GM12878 (cell line): ENCODE measurements at regions of chr14 and their contacts with region 1.

Region 1: GRCh38 chr14:87066221-87066817 is 926.7 kb downstream of the GALC start:
- DNase-seq: no peak
- ATAC-seq: no peak
- H3K4me3 ChIP-seq: no peak overlapping the region
- H3K27ac ChIP-seq: no peak overlapping the region
- H3K4me1 ChIP-seq: no peaks in the 10 kb centered on the region
- H3K27me3 ChIP-seq: no peaks in the 10 kb centered on the region
- CTCF ChIP-seq: peak in 1 of 3 experiments; percentile 10; a peak in 1 of 6 replicates
- EP300 ChIP-seq: no peak
- POLR2A ChIP-seq: no peak
- RAD21 ChIP-seq: no peak

Region 2: GRCh38 chr14:86961106-86961716 is 105.1 kb before region 1 on chr14:
- CTCF ChIA-PET with region 1: no interaction called
- POLR2A ChIA-PET with region 1: no interaction called
- RAD21 ChIA-PET with region 1: no interaction called
- SMC1A ChIA-PET with region 1: no interaction called
- in situ Hi-C with region 1: no loop called
- intact Hi-C with region 1: no loop called
- DNase-seq: no peak
- ATAC-seq: peak; percentile 65; the same call in 2 of the 3 replicates
- H3K4me3 ChIP-seq: no peak overlapping the region
- H3K27ac ChIP-seq: no peak overlapping the region
- H3K4me1 ChIP-seq: no peaks in the 10 kb centered on the region
- H3K27me3 ChIP-seq: no peaks in the 10 kb centered on the region
- CTCF ChIP-seq: peak; percentile 15 to 29 (median 18); a peak in 3 of 6 replicates
- EP300 ChIP-seq: no peak
- POLR2A ChIP-seq: no peak
- RAD21 ChIP-seq: 0 out of 2 replicates have a peak, but pooled peaks have one; percentile 22

Region 3: DNA sequence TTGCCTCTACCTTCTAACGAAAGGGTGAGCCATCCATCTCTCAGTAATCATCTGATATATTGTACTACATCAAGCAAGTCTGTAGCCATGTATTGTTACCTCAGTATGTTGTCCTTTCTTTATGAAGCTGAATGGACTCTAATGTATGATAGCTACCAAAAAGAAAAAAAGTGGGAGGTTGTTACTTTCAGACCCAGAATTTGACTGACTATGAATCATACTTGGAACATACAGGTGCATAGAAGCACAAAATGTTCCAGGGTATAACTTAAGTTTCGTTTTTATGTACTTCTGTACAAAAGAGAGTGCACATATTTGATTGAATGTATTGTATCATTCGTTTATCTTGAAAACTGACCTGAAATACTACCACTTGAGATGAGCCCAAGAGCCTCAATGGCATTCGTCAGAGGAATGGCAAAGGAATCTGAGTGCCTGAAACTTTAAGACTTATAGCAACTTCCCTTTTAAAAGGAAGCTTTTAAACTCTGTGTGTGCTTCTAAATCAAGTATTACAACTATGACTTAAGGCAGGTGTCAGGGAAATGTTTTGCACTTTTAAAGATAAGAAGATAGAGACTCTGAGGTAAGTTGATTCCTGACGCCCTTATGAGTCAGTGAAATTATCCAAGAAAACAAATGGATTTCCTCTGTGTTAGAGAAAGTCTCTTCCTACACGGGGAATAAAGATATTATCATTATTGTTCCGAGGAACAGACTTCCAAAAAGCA is 24.9 kb before region 1 on chr14:
- CTCF ChIA-PET with region 1: no interaction called
- POLR2A ChIA-PET with region 1: no interaction called
- RAD21 ChIA-PET with region 1: no interaction called
- SMC1A ChIA-PET with region 1: no interaction called
- in situ Hi-C with region 1: no loop called
- intact Hi-C with region 1: no loop called
- DNase-seq: no peak
- ATAC-seq: no peak
- H3K4me3 ChIP-seq: no peak overlapping the region
- H3K27ac ChIP-seq: no peak overlapping the region
- H3K4me1 ChIP-seq: no peaks in the 10 kb centered on the region
- H3K27me3 ChIP-seq: no peaks in the 10 kb centered on the region
- CTCF ChIP-seq: no peak
- EP300 ChIP-seq: no peak
- POLR2A ChIP-seq: no peak
- RAD21 ChIP-seq: no peak

Region 4: DNA sequence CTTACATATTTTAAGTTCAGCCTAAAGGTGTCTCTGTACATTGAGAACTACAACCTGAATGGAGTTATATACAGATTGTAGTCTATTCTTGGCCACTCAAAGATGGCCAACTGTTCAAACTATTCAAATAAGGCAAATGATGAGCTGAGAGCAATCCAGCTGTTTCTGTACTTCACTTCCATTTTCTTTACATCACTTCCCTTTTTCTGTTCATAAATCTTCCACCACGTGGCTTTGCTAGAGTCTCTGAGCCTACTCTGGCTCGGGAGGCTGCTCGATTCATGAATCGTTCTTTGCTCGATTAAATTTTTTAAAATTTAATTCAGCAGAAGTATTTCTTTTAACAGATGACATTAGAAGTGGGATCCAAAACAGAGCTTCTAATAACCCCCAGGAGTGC is 47.0 kb after region 1 on chr14:
- CTCF ChIA-PET with region 1: no interaction called
- POLR2A ChIA-PET with region 1: no interaction called
- RAD21 ChIA-PET with region 1: no interaction called
- SMC1A ChIA-PET with region 1: no interaction called
- in situ Hi-C with region 1: no loop called
- intact Hi-C with region 1: loop called (anchors 5 kb)
- DNase-seq: no peak
- ATAC-seq: no peak
- H3K4me3 ChIP-seq: no peak overlapping the region
- H3K27ac ChIP-seq: no peak overlapping the region
- H3K4me1 ChIP-seq: no peaks in the 10 kb centered on the region
- H3K27me3 ChIP-seq: no peaks in the 10 kb centered on the region
- CTCF ChIP-seq: no peak
- EP300 ChIP-seq: no peak
- POLR2A ChIP-seq: no peak
- RAD21 ChIP-seq: no peak

Region 5: DNA sequence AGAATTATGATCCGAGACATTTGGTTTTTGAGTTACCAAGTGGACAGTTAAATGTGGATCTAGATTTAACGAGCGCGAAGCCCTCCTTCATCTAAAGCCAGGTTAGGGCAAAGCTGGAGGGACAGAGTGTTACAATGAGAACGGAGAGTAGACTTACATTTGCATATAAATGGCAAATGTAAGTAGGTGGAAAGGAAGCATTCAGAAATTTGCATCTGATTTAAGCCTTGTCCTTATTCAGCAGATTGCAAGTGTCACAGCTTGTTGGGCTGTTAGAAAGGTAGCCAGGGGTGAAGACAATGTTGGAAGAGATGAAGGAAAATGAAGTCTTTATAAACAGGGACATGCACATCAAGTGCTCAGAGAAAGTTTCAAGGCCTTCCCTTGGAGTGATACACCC is 120.4 kb after region 1 on chr14:
- CTCF ChIA-PET with region 1: no interaction called
- POLR2A ChIA-PET with region 1: no interaction called
- RAD21 ChIA-PET with region 1: no interaction called
- SMC1A ChIA-PET with region 1: no interaction called
- in situ Hi-C with region 1: no loop called
- intact Hi-C with region 1: no loop called
- DNase-seq: no peak
- ATAC-seq: no peak
- H3K4me3 ChIP-seq: no peak overlapping the region
- H3K27ac ChIP-seq: no peak overlapping the region
- H3K4me1 ChIP-seq: no peaks in the 10 kb centered on the region
- H3K27me3 ChIP-seq: no peaks in the 10 kb centered on the region
- CTCF ChIP-seq: no peak
- EP300 ChIP-seq: no peak
- POLR2A ChIP-seq: no peak
- RAD21 ChIP-seq: no peak